ENCODE measurements at regions of chr1 and their contacts with region 1.

Region 1: GRCh38 chr1:37486680-37487618 is 12.6 kb downstream of the ZC3H12A start:
- DNase-seq: peak; percentile 84
- H3K4me3 Mint-ChIP-seq: no peak overlapping the region
- H3K27ac Mint-ChIP-seq: peak overlapping the region; percentile 72
- H3K4me1 Mint-ChIP-seq: peaks cover 19% of the 10 kb centered on the region
- H3K27me3 Mint-ChIP-seq: no peaks in the 10 kb centered on the region

Region 2: DNA sequence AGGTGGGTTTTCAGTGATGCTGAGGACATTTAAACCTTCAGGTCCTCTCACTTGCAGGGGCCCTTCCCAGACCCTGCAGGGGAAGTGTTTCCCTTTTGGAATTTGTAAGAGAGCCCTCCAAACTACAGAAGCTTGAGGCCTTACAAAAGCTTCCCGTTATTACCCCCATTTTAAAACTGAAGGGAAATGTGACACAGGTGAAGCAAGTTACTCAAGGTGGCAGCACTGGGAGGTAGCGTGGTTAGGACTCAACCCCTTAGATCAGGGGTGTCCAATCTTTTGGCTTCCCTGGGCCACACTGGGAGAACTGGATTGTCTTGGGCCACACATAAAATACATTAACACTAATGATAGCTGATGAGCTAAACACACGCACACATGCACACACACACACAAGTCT is 28.4 kb before region 1 on chr1:
- CTCF ChIA-PET with region 1: interaction called, 241 read pairs
- POLR2A ChIA-PET with region 1: interaction called, 4 read pairs
- intact Hi-C with region 1: loop called (anchors 1 kb)
- DNase-seq: no peak
- H3K4me3 Mint-ChIP-seq: no peak overlapping the region
- H3K27ac Mint-ChIP-seq: no peak overlapping the region
- H3K4me1 Mint-ChIP-seq: peaks cover 4% of the 10 kb centered on the region
- H3K27me3 Mint-ChIP-seq: no peaks in the 10 kb centered on the region

Region 3: DNA sequence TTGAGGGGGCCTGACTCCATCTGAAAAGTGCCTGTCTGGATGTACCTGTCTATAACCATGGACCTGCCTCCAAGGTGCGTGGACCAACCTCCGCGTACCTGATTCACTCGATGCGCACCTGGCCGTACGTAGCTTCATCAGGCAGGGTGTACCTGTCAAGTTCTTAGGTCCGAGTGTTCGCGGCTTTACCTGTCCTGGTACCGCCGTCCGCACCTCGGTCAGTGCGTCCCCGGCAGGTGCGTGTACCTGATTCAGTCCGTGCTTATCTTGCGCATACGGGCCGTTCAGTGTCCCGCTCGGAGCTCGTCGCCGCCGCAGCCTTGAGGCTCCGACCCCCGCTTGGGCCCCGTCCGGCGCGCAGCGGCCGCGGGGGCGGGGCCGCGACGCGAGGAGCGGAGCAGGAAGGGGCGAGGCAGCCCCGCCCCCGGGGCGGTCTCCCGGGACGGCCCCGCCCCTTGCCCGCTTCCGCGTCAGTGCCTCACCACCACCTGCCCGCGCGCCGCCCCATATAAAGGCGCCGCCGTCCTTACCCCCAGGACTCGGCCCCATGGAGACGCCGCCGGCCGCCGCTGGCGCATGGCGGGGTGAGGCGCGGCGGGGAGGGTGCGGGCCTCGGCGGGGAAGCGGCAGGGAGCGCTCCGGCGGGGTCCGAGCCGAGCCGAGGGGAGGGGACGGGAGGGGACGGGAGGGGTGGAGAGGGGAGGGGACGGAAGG is 12.7 kb before region 1 on chr1 and contains the start of gene ZC3H12A:
- CTCF ChIA-PET with region 1: interaction called, 157 read pairs
- POLR2A ChIA-PET with region 1: interaction called, 56 read pairs
- intact Hi-C with region 1: no loop called
- DNase-seq: peak; percentile 93
- H3K4me3 Mint-ChIP-seq: peak within 1 kb of the TSS; percentile 94
- H3K27ac Mint-ChIP-seq: peak within 1 kb of the TSS; percentile 100
- H3K4me1 Mint-ChIP-seq: peaks cover 37% of the 10 kb centered on the region
- H3K27me3 Mint-ChIP-seq: no peaks in the 10 kb centered on the region
- total RNA-seq, gene ZC3H12A: 39.0 to 40.8 TPM

Region 4: DNA sequence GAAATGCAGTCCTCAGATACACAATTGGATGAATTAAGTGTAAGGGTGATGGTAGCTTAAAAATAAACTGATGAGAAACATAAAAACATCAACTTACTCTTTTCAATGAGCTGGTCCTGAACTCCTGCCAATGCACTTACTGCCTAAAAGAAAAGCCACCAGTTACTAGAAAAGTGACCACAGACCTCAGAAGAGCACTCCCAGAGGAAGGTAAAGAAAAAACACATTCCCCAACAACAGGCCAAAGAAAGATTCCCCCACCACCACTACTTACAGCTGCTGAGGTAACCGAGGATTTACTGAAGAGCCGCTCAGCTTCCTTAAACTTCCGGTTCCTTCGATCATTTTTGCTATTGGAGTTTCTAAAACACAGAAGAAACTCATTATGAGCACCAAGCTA is 22.2 kb after region 1 on chr1:
- CTCF ChIA-PET with region 1: interaction called, 75 read pairs
- POLR2A ChIA-PET with region 1: interaction called, 9 read pairs
- intact Hi-C with region 1: no loop called
- DNase-seq: no peak
- H3K4me3 Mint-ChIP-seq: no peak overlapping the region
- H3K27ac Mint-ChIP-seq: peak overlapping the region; percentile 52
- H3K4me1 Mint-ChIP-seq: peaks cover 44% of the 10 kb centered on the region
- H3K27me3 Mint-ChIP-seq: no peaks in the 10 kb centered on the region

Region 5: DNA sequence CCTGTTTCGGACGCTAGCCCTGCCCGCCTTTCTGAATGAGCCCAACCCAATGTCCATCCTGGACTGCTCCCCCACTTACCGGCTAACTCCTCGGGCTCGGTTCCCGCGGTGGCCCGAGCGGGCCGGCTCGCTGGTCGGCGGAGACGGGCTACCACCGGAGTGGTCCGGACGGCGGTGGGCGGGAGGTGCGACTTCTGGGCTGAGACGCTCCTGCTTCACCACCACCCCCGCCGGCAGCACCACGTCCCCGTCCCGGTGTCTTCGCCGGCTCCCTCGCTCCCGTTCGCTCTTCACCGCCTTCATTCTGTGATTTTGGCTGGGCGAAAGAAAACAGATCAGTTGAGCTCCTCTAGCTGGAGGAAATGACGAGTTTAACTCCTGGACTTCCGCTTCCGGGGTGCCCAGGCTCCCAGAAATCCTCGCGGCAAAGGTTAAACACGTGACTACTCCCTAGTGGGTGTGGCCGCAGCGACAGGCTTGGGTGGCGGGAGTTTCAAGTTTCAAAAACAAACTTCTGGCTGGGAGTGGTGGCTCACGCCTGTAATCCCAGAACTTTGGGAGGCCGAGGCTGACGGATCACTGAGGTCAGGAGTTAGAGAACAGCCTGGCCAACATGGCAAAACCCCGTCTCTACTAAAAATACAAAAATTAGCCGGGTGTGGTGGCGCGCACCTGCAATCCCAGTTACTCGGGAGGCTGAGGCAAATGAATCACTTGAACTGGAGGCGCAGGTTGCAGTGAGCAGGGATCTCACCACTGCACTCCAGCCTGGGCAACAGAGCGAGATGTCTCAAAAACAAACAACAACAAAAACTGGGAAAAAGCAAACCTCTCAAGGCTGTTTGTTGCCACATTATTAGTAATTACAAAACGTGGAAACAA is 67.2 kb after region 1 on chr1 and contains the start of gene SNIP1:
- CTCF ChIA-PET with region 1: interaction called, 13 read pairs
- POLR2A ChIA-PET with region 1: no interaction called
- intact Hi-C with region 1: no loop called
- DNase-seq: peak; percentile 95
- H3K4me3 Mint-ChIP-seq: peak within 1 kb of the TSS; percentile 91
- H3K27ac Mint-ChIP-seq: peak within 1 kb of the TSS; percentile 93
- H3K4me1 Mint-ChIP-seq: peaks cover 45% of the 10 kb centered on the region
- H3K27me3 Mint-ChIP-seq: no peaks in the 10 kb centered on the region
- total RNA-seq, gene SNIP1: 18.1 to 19.0 TPM

Region 6: GRCh38 chr1:37570528-37571334 is 83.8 kb after region 1 on chr1:
- CTCF ChIA-PET with region 1: no interaction called
- POLR2A ChIA-PET with region 1: no interaction called
- intact Hi-C with region 1: no loop called
- DNase-seq: no peak
- H3K4me3 Mint-ChIP-seq: no peak overlapping the region
- H3K27ac Mint-ChIP-seq: peak overlapping the region; percentile 44
- H3K4me1 Mint-ChIP-seq: peaks cover 42% of the 10 kb centered on the region
- H3K27me3 Mint-ChIP-seq: no peaks in the 10 kb centered on the region

Measured in activated CD4-positive, alpha-beta memory T cell treated with anti-CD3 and anti-CD28 coated beads for 36 hours (primary cell).